Activated CD4-positive, alpha-beta T cell treated with anti-CD3 and anti-CD28 coated beads, Interleukin-2, amount 10 ng/mL, durations not matched to agents 7 days and 5 days (primary cell): ENCODE measurements at regions of chr11 and their contacts with region 1.

Region 1: GRCh38 chr11:68727785-68728184 is 23.5 kb downstream of the TESMIN start:
- DNase-seq: no peak
- H3K4me3 Mint-ChIP-seq: no peak overlapping the region
- H3K27ac Mint-ChIP-seq: no peak overlapping the region
- H3K4me1 Mint-ChIP-seq: no peaks in the 10 kb centered on the region
- H3K27me3 Mint-ChIP-seq: no peaks in the 10 kb centered on the region

Region 2: GRCh38 chr11:68584097-68584496 is 143.7 kb before region 1 on chr11:
- CTCF ChIA-PET with region 1: no interaction called
- POLR2A ChIA-PET with region 1: no interaction called
- DNase-seq: peak; percentile 52
- H3K4me3 Mint-ChIP-seq: no peak overlapping the region
- H3K27ac Mint-ChIP-seq: no peak overlapping the region
- H3K4me1 Mint-ChIP-seq: peaks cover 2% of the 10 kb centered on the region
- H3K27me3 Mint-ChIP-seq: no peaks in the 10 kb centered on the region

Region 3: GRCh38 chr11:68598816-68599653 is 128.8 kb before region 1 on chr11:
- CTCF ChIA-PET with region 1: no interaction called
- POLR2A ChIA-PET with region 1: interaction called, 15 read pairs
- DNase-seq: no peak
- H3K4me3 Mint-ChIP-seq: no peak overlapping the region
- H3K27ac Mint-ChIP-seq: no peak overlapping the region
- H3K4me1 Mint-ChIP-seq: no peaks in the 10 kb centered on the region
- H3K27me3 Mint-ChIP-seq: no peaks in the 10 kb centered on the region

Region 4: GRCh38 chr11:68753296-68753695 is 25.5 kb after region 1 on chr11:
- CTCF ChIA-PET with region 1: no interaction called
- POLR2A ChIA-PET with region 1: no interaction called
- DNase-seq: no peak
- H3K4me3 Mint-ChIP-seq: no peak overlapping the region
- H3K27ac Mint-ChIP-seq: no peak overlapping the region
- H3K4me1 Mint-ChIP-seq: peaks cover 16% of the 10 kb centered on the region
- H3K27me3 Mint-ChIP-seq: peaks cover 2% of the 10 kb centered on the region